Upper lobe of right lung (tissue), 1 donor: ENCODE measurements at regions of chr10 and their contacts with region 1.

Region 1: DNA sequence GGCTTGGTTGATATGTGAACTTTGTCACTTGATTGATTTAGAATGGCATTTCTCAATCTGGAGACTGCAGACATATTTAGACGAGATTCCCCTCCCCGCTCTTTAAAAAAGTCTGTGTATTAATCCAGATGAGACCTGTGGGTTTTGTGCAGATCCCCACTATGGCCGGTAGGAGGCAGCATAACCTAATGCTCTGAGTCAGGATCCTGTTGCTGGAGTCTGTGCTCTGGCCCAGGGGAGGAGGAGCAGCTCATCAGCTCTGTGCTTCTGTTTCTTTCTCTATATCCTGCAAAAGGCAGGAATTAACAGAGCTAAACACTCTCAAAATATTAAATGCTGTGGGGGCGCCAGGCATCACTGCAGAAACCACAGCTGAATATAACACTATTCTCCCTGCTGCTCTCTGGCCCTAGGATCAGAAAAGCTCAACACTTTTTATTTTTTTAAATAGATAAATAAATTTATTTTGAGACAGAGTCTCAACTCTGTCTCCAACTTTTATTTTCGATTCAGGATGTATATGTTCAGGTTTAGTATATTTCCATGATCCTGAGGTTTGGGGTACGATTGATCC is 23.9 kb upstream of the SEPHS1 start:
- DNase-seq: no peak
- ATAC-seq: peak; percentile 100
- H3K4me3 ChIP-seq: no peak overlapping the region
- H3K27ac ChIP-seq: no peak overlapping the region
- H3K4me1 ChIP-seq: no peaks in the 10 kb centered on the region
- H3K27me3 ChIP-seq: no peaks in the 10 kb centered on the region
- CTCF ChIP-seq: peak; percentile 93

Region 2: DNA sequence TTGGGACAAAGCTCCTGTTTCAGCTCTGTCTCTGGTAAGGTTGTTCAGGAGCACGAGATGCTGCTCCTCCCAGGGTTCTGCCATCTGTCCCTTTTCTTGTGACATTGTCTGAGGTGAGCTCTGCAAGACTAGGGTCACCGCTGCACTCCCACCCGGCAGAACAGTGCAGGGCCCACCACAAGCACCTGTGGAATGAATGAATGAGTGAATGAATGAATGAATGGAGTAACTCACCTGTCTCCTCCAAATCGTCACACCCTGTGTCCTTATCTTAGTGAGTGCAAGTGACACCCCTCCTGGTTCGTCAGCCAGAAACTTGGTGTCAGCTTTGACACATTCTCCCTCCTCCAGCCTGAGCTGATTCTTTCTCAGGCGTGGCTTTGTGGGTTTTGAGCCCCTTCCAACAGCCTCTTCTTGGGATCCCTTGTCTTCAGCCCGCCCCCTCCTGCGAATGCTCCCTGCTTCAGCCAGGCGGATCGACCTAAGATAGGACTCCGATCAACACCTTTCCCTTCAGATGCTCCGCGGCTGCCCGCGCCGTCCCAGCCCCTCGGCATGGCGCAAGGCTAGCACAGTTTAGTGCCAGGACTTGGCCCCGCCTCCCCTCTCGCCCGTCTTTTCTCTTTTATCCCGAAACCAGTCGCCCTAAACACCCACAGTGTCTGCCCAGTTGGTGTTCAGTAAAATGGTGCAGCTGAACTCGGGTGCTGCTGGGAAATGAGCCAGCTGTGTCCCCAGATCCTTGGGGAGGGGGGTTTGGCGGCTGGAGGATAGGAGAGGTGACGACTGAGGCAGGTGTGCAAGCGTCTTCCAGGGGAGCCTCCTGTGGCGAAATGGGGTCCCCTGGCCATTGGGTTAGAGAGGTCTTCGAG is 67.6 kb after region 1 on chr10:
- intact Hi-C with region 1: loop called (anchors 10 kb)
- DNase-seq: peak; percentile 72
- ATAC-seq: peak; percentile 51
- H3K4me3 ChIP-seq: peak overlapping the region; percentile 39
- H3K27ac ChIP-seq: no peak overlapping the region
- H3K4me1 ChIP-seq: peaks cover 12% of the 10 kb centered on the region
- H3K27me3 ChIP-seq: peaks cover 20% of the 10 kb centered on the region
- CTCF ChIP-seq: no peak

Region 3: DNA sequence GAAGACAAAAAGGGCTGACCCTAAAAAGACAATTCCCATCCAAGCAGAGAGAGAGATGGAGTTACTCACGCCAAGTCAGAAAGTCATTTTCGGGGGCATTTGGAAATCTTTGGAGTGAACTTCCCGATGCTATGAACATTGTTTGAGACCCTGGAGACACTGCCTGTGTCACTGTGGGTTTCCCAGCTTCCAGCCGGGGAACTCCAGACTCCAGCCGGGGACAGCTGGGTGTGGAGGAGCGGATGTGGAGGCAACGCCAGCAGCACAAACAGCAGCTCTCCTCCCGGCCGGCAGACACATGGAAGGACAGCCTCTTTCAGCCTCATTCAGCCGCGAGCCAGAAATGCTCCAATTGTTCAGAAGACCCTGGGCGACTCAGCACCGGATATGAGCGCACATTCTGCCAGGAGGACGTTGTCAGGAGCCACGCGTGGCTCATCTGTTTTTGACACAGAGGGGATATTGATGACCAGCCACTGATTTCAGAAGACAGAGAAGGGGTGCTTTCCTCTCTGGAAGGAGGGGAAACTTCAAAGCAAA is 312.3 kb after region 1 on chr10:
- intact Hi-C with region 1: no loop called
- DNase-seq: peak; percentile 70
- ATAC-seq: peak; percentile 72
- H3K4me3 ChIP-seq: no peak overlapping the region
- H3K27ac ChIP-seq: peak overlapping the region; percentile 53
- H3K4me1 ChIP-seq: peaks cover 21% of the 10 kb centered on the region
- H3K27me3 ChIP-seq: no peaks in the 10 kb centered on the region
- CTCF ChIP-seq: no peak